ENCODE measurements at regions of chr4 and their contacts with region 1.

Region 1: GRCh38 chr4:15681207-15682015 is at the start of gene FAM200B:
- DNase-seq: peak; percentile 99
- H3K4me3 ChIP-seq: peak within 1 kb of the TSS; percentile 90
- H3K27ac ChIP-seq: peak within 1 kb of the TSS; percentile 90
- H3K4me1 ChIP-seq: peaks cover 55% of the 10 kb centered on the region
- CTCF ChIP-seq: no peak
- total RNA-seq, gene FAM200B: 11.0 and 11.5 TPM in 2 replicates

Region 2: DNA sequence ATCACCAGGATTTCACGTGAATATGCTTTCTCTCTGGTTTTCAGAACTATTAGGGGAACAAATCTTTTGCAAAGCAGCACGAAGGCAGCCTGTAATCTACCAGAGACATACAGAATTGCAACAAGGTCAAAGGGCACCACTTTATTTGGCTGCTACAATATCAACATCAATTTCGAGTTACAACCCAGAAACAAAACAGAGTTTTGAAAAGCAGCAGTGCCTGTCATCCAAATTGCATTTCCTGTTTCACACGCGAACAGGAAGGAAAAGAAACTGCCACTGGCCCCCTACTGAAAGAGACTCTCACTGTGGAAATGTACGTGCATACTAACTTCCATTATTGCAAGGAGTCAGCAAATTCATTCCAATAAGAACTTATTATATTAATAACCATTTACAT is 270.7 kb before region 1 on chr4:
- CTCF ChIA-PET with region 1: no interaction called
- POLR2A ChIA-PET with region 1: interaction called, 3 read pairs
- intact Hi-C with region 1: loop called (anchors 5 kb)
- DNase-seq: peak; percentile 62
- H3K4me3 ChIP-seq: peak overlapping the region; percentile 34
- H3K27ac ChIP-seq: peak overlapping the region; percentile 19
- H3K4me1 ChIP-seq: peaks cover 41% of the 10 kb centered on the region
- CTCF ChIP-seq: no peak

Region 3: GRCh38 chr4:15655229-15656037 is 26.0 kb before region 1 on chr4 and contains the start of gene FBXL5:
- CTCF ChIA-PET with region 1: no interaction called
- POLR2A ChIA-PET with region 1: interaction called, 67 read pairs
- intact Hi-C with region 1: loop called (anchors 1 kb)
- DNase-seq: peak; percentile 92
- H3K4me3 ChIP-seq: peak within 1 kb of the TSS; percentile 92
- H3K27ac ChIP-seq: peak within 1 kb of the TSS; percentile 68
- H3K4me1 ChIP-seq: peaks cover 48% of the 10 kb centered on the region
- CTCF ChIP-seq: no peak
- total RNA-seq, gene FBXL5: 73.9 and 102 TPM in 2 replicates

Region 4: GRCh38 chr4:15786743-15787142 is 105.3 kb after region 1 on chr4:
- CTCF ChIA-PET with region 1: no interaction called
- POLR2A ChIA-PET with region 1: no interaction called
- intact Hi-C with region 1: no loop called
- DNase-seq: no peak
- H3K4me3 ChIP-seq: no peak overlapping the region
- H3K27ac ChIP-seq: no peak overlapping the region
- H3K4me1 ChIP-seq: peaks cover 46% of the 10 kb centered on the region
- CTCF ChIP-seq: no peak